ENCODE measurements at regions of chr11 and their contacts with region 1.

Region 1: DNA sequence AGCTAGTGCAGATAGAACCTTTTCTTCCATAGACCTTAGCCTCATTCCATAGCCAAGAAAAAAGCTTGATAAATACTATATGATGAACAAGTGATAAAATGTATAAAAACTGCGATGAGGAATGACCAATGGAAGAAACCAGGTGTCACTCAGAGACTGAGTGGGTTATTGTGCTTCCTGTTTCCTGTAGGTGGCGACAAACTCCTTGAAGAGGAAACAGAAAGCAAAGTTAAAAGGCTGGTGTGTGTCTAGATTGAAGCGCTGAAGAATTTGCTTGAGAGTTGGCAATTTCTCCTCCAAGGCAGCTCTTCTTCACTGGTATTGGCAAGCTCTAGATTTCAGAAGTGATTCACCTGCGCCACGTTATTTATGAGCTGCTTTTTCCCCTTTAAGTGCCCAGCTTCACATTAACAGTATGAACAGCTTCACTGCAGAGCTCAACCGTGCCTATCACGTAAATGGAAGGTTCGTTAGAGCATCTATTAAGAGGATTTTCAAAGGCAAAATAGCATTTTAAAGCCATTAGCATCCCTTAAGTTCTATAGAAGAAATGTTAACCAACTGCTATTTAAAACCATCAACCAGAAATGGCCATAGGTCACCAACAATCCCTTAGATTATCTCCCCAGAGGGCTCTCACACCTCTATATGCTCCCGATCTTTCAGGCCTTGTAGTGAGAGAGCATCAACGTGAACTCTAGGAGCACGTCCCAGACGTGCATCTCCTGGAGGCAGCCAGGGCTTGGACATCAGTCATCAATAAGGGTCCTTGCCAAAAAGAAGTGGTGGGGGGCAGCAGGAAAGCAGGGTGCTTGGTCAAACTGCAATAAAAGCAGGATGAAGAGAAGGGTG is 179.4 kb downstream of the CADM1 start:
- DNase-seq: no peak
- ATAC-seq: peak; percentile 78
- H3K4me3 ChIP-seq: no peak overlapping the region
- H3K27ac ChIP-seq: no peak overlapping the region
- H3K4me1 ChIP-seq: no peaks in the 10 kb centered on the region
- H3K27me3 ChIP-seq: no peaks in the 10 kb centered on the region

Region 2: DNA sequence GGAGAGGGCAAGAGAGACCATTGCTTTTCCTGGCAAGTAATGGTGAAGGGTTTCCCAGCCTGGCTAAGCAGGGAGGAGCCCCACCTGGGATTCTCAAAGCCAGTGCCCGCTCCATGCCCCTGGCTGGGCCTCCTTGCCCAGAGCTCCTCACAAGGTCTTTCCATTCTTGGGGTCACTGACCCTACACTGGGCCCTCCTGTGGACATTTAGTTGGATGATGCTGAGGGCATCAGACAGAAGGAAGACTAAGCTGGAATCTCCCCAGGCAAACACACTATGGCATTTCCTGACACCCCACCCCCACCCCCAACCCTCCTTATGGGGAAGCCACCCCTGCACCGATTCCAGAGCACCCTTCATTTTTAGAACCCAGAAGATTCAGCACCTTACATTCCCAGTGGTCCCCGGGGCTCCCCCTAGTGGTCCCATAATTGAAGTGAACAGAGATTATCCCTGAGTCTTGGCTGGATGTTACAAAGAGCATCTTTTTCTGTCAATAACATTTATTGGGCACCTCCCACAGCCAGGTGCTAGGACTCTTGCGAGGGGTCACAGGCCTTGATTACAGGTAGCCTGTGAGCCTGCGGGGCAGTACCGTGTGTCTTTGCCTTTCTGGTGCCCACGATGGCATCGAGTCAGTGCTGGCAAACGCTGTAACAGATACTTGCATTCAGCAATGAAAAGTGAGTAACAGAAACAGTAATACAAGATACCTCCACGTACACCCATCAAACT is 899.5 kb after region 1 on chr11:
- intact Hi-C with region 1: loop called (anchors 10 kb)
- DNase-seq: no peak
- ATAC-seq: no peak
- H3K4me3 ChIP-seq: no peak overlapping the region
- H3K27ac ChIP-seq: no peak overlapping the region
- H3K4me1 ChIP-seq: no peaks in the 10 kb centered on the region
- H3K27me3 ChIP-seq: no peaks in the 10 kb centered on the region